ENCODE measurements at regions of chr22 and their contacts with region 1.

Region 1: GRCh38 chr22:30289134-30289979 is at the start of gene CASTOR1:
- DNase-seq: peak; percentile 94
- ATAC-seq: peak; percentile 78
- H3K4me3 ChIP-seq: peak within 1 kb of the TSS; percentile 68 to 80 (median 72)
- H3K27ac ChIP-seq: no peak within 1 kb of the TSS
- H3K4me1 ChIP-seq: peaks cover 29% of the 10 kb centered on the region
- H3K27me3 ChIP-seq: no peaks in the 10 kb centered on the region; a peak in 1 of 5 replicates
- CTCF ChIP-seq: no peak
- EP300 ChIP-seq: no peak
- POLR2A ChIP-seq: peak in 1 of 2 experiments; percentile 62; a peak in 1 of 4 replicates
- RAD21 ChIP-seq: peak; percentile 5; the same call in 1 of the 2 replicates
- total RNA-seq, gene CASTOR1: 1.1 and 2.6 TPM in 2 replicates

Region 2: GRCh38 chr22:30104501-30105156 is 184.7 kb before region 1 on chr22:
- CTCF ChIA-PET with region 1: interaction called, 23 read pairs
- POLR2A ChIA-PET with region 1: no interaction called
- in situ Hi-C with region 1: no loop called
- intact Hi-C with region 1: no loop called
- DNase-seq: no peak
- ATAC-seq: no peak
- H3K4me3 ChIP-seq: no peak overlapping the region
- H3K27ac ChIP-seq: no peak overlapping the region
- H3K4me1 ChIP-seq: no peaks in the 10 kb centered on the region
- H3K27me3 ChIP-seq: no peaks in the 10 kb centered on the region; a peak in 1 of 5 replicates
- CTCF ChIP-seq: no peak
- EP300 ChIP-seq: no peak
- POLR2A ChIP-seq: no peak
- RAD21 ChIP-seq: no peak

Region 3: DNA sequence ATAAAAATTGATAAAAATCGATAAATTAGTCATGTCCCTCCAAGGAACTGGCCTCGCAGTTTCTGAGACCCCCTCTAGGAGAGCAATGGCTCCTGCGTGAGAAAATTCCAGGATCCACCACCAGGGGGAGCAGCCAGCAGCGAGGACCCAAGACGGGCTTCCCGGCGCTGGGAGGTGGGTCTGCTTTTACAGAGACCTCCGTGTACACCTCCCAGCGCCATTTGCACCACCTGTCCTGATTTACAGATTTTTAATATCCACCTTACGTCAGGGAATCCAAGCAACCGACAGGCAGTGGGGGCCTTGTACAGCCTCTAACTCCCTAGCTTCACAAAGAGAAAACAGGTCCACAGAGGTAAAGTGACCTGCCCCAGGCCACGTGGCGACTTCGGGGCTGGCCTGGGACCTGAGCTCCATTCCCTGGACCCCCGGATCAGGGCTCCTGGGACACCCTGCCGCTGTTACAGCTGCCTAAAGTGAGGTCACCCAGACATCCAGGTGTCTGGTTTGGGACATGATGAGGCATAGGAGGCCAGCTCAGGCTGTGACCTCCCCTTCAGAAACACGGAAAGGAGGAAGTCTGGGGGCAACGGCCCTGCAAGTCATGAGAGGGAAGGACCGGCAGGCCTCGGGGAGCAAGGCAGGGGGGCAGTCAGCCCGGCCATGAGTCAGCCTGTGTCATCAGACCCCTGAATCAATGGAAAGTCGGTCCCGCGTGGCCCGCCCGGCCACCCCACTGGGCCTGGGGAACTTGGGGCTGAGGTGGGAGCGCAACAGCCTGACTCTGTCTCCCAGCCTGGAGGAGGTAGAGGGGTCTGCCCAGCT is 26.2 kb before region 1 on chr22:
- CTCF ChIA-PET with region 1: interaction called, 20 read pairs
- POLR2A ChIA-PET with region 1: no interaction called
- in situ Hi-C with region 1: no loop called
- intact Hi-C with region 1: loop called (anchors 1 kb)
- DNase-seq: peak; percentile 64
- ATAC-seq: peak; percentile 62
- H3K4me3 ChIP-seq: peak overlapping the region; percentile 31 to 63 (median 36)
- H3K27ac ChIP-seq: no peak overlapping the region
- H3K4me1 ChIP-seq: peaks cover 32% of the 10 kb centered on the region
- H3K27me3 ChIP-seq: peaks cover 12 to 43% of the 10 kb centered on the region in 2 experiments
- CTCF ChIP-seq: peak; percentile 78
- EP300 ChIP-seq: no peak
- POLR2A ChIP-seq: no peak
- RAD21 ChIP-seq: peak; percentile 52

Region 4: GRCh38 chr22:30326706-30327362 is 37.5 kb after region 1 on chr22 and contains the start of gene TBC1D10A:
- CTCF ChIA-PET with region 1: interaction called, 13 read pairs
- POLR2A ChIA-PET with region 1: interaction called, 19 read pairs
- in situ Hi-C with region 1: no loop called
- intact Hi-C with region 1: loop called (anchors 2 kb)
- DNase-seq: peak; percentile 90
- ATAC-seq: peak; percentile 92
- H3K4me3 ChIP-seq: peak within 1 kb of the TSS; percentile 89 to 95 (median 89)
- H3K27ac ChIP-seq: peak within 1 kb of the TSS; percentile 60
- H3K4me1 ChIP-seq: peaks cover 39% of the 10 kb centered on the region
- H3K27me3 ChIP-seq: no peaks in the 10 kb centered on the region; a peak in 1 of 5 replicates
- CTCF ChIP-seq: no peak
- EP300 ChIP-seq: no peak
- POLR2A ChIP-seq: peak in 1 of 2 experiments; percentile 68; a peak in 2 of 4 replicates
- RAD21 ChIP-seq: peak; percentile 55
- total RNA-seq, gene TBC1D10A: 3.6 and 4.2 TPM in 2 replicates

Region 5: DNA sequence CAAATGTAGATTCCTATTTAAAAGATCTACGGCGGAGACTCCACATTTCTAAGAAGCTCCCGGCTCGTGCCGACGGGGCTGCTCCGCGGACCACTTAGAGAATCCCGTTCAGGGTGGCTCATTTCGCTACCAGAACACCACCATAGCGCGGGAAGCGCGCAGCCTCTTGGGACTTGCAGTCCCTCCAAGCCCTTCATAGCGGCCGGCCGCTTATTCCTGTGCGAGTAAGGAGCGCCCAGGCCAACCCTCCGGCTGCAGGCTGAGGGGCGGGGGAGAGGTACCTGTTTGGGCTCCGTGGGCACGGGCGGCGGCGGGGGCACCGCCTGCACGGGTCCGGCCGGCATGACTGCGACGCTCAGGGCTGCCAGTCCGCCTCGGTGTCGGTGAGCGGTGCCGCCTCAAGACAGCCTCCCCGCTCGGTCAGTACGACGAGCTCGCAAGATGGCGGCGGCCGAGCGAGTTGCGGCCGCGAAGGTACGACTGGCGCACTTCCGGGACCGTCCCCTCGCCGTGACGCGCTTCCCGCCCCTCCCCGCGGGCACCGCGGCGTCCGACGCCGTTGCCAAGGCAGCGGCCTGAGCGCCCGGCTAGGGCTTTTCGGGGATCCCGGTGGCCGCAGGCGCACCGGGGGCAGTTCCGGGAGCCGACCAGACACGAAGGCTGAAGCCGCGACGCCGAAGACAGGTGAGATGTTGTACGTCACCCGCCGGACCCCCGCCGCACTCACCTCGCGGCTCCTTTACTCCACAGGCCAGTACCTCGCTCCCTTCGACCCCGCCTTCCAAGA is 67.3 kb after region 1 on chr22 and contains the starts of genes CCDC157 and SF3A1:
- CTCF ChIA-PET with region 1: no interaction called
- POLR2A ChIA-PET with region 1: interaction called, 28 read pairs
- in situ Hi-C with region 1: no loop called
- intact Hi-C with region 1: no loop called
- DNase-seq: peak; percentile 88
- ATAC-seq: peak; percentile 97
- H3K4me3 ChIP-seq: peak within 1 kb of the TSS; percentile 89 to 99 (median 96)
- H3K27ac ChIP-seq: peak within 1 kb of the TSS; percentile 93
- H3K4me1 ChIP-seq: peaks cover 50% of the 10 kb centered on the region
- H3K27me3 ChIP-seq: no peaks in the 10 kb centered on the region; a peak in 2 of 5 replicates
- CTCF ChIP-seq: peak; percentile 19; the same call in 1 of the 2 replicates
- EP300 ChIP-seq: no peak
- POLR2A ChIP-seq: peak; percentile 94 to 96
- RAD21 ChIP-seq: no peak
- total RNA-seq, gene CCDC157: 0.98 and 1.6 TPM in 2 replicates
- total RNA-seq, gene SF3A1: 22.0 and 31.8 TPM in 2 replicates

Region 6: DNA sequence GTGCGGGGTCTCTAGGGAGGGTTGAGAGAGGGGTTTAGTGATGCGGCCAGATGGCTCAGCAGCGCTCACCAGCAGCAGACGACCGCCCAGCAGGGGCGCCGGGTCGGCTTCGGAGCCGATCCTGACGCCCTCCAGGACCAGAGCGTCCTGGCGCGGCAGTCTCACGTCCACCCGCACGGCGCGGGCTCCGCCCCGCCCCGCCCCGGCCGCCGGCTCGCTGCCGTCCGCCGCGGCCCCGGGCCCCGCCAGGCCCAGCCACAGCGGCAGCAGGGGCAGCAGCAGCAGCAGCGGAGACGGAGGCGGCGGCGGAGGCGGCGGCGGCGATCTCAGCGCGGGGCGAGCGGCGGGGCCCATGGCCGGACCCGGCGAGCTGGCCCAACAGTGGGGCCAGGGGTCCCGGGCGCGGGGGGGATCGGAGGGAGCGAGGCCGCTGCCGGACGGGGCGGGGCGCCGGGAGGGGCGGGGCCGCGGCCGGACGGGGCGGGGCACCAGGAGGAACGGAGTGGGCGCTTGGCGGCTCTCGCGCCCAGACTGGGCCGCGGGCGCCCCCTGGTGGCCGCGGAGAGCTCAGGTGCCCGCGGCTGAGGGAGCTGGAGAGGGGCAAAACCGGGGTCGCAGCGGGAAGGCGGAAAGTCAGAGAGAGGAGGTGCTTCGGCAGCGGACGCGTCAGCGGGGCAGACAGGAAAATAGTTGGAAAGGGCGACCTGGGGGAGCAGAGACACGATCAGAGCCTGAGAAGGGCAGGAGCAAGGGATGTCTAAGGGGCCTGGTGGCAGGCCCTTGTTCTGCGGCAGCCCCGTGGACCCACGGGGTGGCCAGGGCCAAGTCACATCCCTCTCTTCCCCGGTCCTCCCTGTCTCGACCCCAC is 97.8 kb after region 1 on chr22 and contains the start of gene RNF215:
- CTCF ChIA-PET with region 1: interaction called, 26 read pairs
- POLR2A ChIA-PET with region 1: interaction called, 7 read pairs
- in situ Hi-C with region 1: loop called (anchors 5 kb)
- intact Hi-C with region 1: loop called (anchors 1 kb)
- DNase-seq: peak; percentile 54
- ATAC-seq: peak; percentile 71
- H3K4me3 ChIP-seq: peak within 1 kb of the TSS; percentile 49 to 71 (median 64); a peak in 5 of 6 replicates
- H3K27ac ChIP-seq: no peak within 1 kb of the TSS
- H3K4me1 ChIP-seq: peaks cover 21% of the 10 kb centered on the region
- H3K27me3 ChIP-seq: no peaks in the 10 kb centered on the region
- CTCF ChIP-seq: peak; percentile 89
- EP300 ChIP-seq: no peak
- POLR2A ChIP-seq: no peak; a peak in 1 of 4 replicates
- RAD21 ChIP-seq: peak; percentile 90
- total RNA-seq, gene RNF215: 2.4 and 5.3 TPM in 2 replicates